ENCODE measurements at regions of chr12 and their contacts with region 1.

Region 1: DNA sequence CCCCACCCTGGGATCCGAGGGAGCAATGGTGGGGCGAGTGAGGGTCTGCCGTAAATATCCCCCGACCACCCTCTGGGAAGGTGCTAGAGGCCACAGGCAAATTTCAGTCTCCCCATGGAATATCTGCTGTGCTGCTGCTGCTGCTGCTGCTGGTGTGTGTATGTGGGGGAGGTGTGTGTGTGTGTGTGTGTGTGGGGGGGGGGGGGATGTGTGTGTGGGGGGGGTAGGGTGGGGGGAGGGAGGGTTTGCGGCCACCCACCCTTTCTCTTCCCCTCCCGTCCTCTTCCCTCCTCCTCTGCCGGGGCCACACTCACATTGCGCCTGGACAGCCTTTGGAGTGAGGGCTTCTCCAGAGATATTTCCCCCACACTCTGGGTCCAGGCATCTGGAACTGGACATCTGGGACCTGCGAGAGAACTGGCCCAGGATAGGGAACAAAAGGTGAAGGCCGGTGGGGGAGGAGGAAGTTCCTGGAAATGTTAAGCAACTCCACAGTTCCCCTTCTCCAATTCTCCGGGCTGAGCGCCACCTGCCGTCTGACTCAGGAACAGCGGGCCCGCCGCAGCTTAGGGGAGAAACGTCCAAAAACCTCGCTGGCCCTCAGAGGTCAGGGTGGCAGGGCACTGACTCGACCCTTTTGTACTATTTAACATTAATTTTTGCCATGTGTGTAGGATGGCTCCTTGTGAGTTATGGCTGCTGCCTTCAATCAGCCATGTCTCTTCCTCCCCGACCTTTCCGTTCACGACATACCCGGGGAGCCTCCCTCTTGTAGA is at the start of gene C1RL:
- DNase-seq: peak; percentile 99
- H3K4me3 ChIP-seq: peak within 1 kb of the TSS; percentile 57 to 82 (median 68)
- H3K27ac ChIP-seq: peak within 1 kb of the TSS; percentile 91 to 96 (median 94)
- H3K4me1 ChIP-seq: peaks cover 17 to 70% (median 57%) of the 10 kb centered on the region in 4 donors
- H3K27me3 ChIP-seq: no peaks in the 10 kb centered on the region
- CTCF ChIP-seq: peak; percentile 98 to 100 (median 99)
- EP300 ChIP-seq: peak; percentile 84
- POLR2A ChIP-seq: peak; percentile 67
- total RNA-seq, gene C1RL: 64.8 to 159 (median 88.2) TPM

Region 2: GRCh38 chr12:6873094-6874014 is 235.6 kb before region 1 on chr12 and contains the start of gene SPSB2:
- intact Hi-C with region 1: loop called (anchors 5 kb)
- DNase-seq: peak; percentile 99
- H3K4me3 ChIP-seq: peak within 1 kb of the TSS; percentile 65 to 88 (median 70)
- H3K27ac ChIP-seq: peak within 1 kb of the TSS; percentile 86 to 89 (median 88)
- H3K4me1 ChIP-seq: peaks cover 37 to 61% (median 51%) of the 10 kb centered on the region in 4 donors
- H3K27me3 ChIP-seq: no peaks in the 10 kb centered on the region
- CTCF ChIP-seq: peak in 2 of 3 experiments; percentile 10 to 37
- EP300 ChIP-seq: no peak
- POLR2A ChIP-seq: peak; percentile 74
- total RNA-seq, gene SPSB2: 4.2 to 10.8 (median 8.5) TPM

Region 3: GRCh38 chr12:6944381-6945186 is 164.4 kb before region 1 on chr12:
- intact Hi-C with region 1: loop called (anchors 5 kb)
- DNase-seq: peak; percentile 98
- H3K4me3 ChIP-seq: peak overlapping the region; percentile 69 to 77 (median 73)
- H3K27ac ChIP-seq: peak overlapping the region; percentile 91 to 97 (median 96)
- H3K4me1 ChIP-seq: peaks cover 35 to 57% (median 55%) of the 10 kb centered on the region in 4 donors
- H3K27me3 ChIP-seq: no peaks in the 10 kb centered on the region
- CTCF ChIP-seq: peak; percentile 81 to 93 (median 91)
- EP300 ChIP-seq: no peak
- POLR2A ChIP-seq: no peak

Region 4: GRCh38 chr12:7060353-7060954 is 48.5 kb before region 1 on chr12 and contains the start of gene C1S:
- intact Hi-C with region 1: loop called (anchors 1 kb)
- DNase-seq: peak; percentile 95
- H3K4me3 ChIP-seq: peak within 1 kb of the TSS; percentile 44 to 68 (median 54)
- H3K27ac ChIP-seq: peak within 1 kb of the TSS; percentile 79 to 89 (median 82)
- H3K4me1 ChIP-seq: peaks cover 14 to 74% (median 63%) of the 10 kb centered on the region in 4 donors
- H3K27me3 ChIP-seq: no peaks in the 10 kb centered on the region
- CTCF ChIP-seq: peak; percentile 88 to 98 (median 96)
- EP300 ChIP-seq: peak; percentile 79
- POLR2A ChIP-seq: peak; percentile 67
- total RNA-seq, gene C1S: 454 to 549 (median 512) TPM

Region 5: GRCh38 chr12:7092229-7092985 is 16.6 kb before region 1 on chr12 and contains the start of gene C1R:
- intact Hi-C with region 1: loop called (anchors 2 kb)
- DNase-seq: peak; percentile 96
- H3K4me3 ChIP-seq: peak within 1 kb of the TSS; percentile 53 to 75 (median 61)
- H3K27ac ChIP-seq: peak within 1 kb of the TSS; percentile 81 to 88 (median 85)
- H3K4me1 ChIP-seq: peaks cover 19 to 61% (median 54%) of the 10 kb centered on the region in 4 donors
- H3K27me3 ChIP-seq: no peaks in the 10 kb centered on the region
- CTCF ChIP-seq: peak; percentile 91 to 95 (median 94)
- EP300 ChIP-seq: no peak
- POLR2A ChIP-seq: peak; percentile 68
- total RNA-seq, gene C1R: 324 to 603 (median 572) TPM

Region 6: GRCh38 chr12:7411343-7411742 is 302.4 kb after region 1 on chr12:
- intact Hi-C with region 1: no loop called
- DNase-seq: no peak
- H3K4me3 ChIP-seq: no peak overlapping the region
- H3K27ac ChIP-seq: no peak overlapping the region
- H3K4me1 ChIP-seq: no peaks in the 10 kb centered on the region
- H3K27me3 ChIP-seq: no peaks in the 10 kb centered on the region
- CTCF ChIP-seq: no peak
- EP300 ChIP-seq: no peak
- POLR2A ChIP-seq: no peak

Measured in esophagus muscularis mucosa (tissue), 4 donors.